ENCODE measurements at regions of chr3 and their contacts with region 1.

Region 1: GRCh38 chr3:117722856-117723255 is 1013.3 kb downstream of the TUSC7 start:
- DNase-seq: no peak
- H3K4me3 ChIP-seq: no peak overlapping the region
- H3K27ac ChIP-seq: no peak overlapping the region
- H3K4me1 ChIP-seq: peaks cover 0 to 21% (median 8%) of the 10 kb centered on the region in 6 donors
- H3K27me3 ChIP-seq: no peaks in the 10 kb centered on the region
- CTCF ChIP-seq: no peak
- POLR2A ChIP-seq: no peak

Region 2: GRCh38 chr3:117026401-117026800 is 696.5 kb before region 1 on chr3:
- intact Hi-C with region 1: loop called (anchors 10 kb)
- DNase-seq: no peak
- H3K4me3 ChIP-seq: no peak overlapping the region
- H3K27ac ChIP-seq: no peak overlapping the region
- H3K4me1 ChIP-seq: no peaks in the 10 kb centered on the region
- H3K27me3 ChIP-seq: no peaks in the 10 kb centered on the region
- CTCF ChIP-seq: no peak
- POLR2A ChIP-seq: no peak

Region 3: GRCh38 chr3:117665296-117665695 is 57.6 kb before region 1 on chr3:
- intact Hi-C with region 1: no loop called
- DNase-seq: no peak
- H3K4me3 ChIP-seq: no peak overlapping the region
- H3K27ac ChIP-seq: no peak overlapping the region
- H3K4me1 ChIP-seq: no peaks in the 10 kb centered on the region
- H3K27me3 ChIP-seq: no peaks in the 10 kb centered on the region
- CTCF ChIP-seq: no peak
- POLR2A ChIP-seq: no peak